CD8-positive, alpha-beta memory T cell (primary cell): ENCODE measurements at regions of chr10 and their contacts with region 1.

Region 1: GRCh38 chr10:27223964-27224363 is 16.6 kb downstream of the ACBD5 start:
- DNase-seq: peak; percentile 11 to 58 (median 35)
- H3K4me3 ChIP-seq: no peak overlapping the region
- H3K4me3 Mint-ChIP-seq: peak overlapping the region; percentile 18 to 84 (median 72)
- H3K27ac ChIP-seq: no peak overlapping the region
- H3K27ac Mint-ChIP-seq: peak overlapping the region in 7 of 8 donors; percentile 75 to 97 (median 91)
- H3K4me1 ChIP-seq: peaks cover 25% of the 10 kb centered on the region
- H3K4me1 Mint-ChIP-seq: peaks cover 32 to 40% (median 38%) of the 10 kb centered on the region in 3 donors
- H3K27me3 ChIP-seq: no peaks in the 10 kb centered on the region
- H3K27me3 Mint-ChIP-seq: no peaks in the 10 kb centered on the region

Region 2: GRCh38 chr10:26950934-26951333 is 273.0 kb before region 1 on chr10:
- CTCF ChIA-PET with region 1: no interaction called
- POLR2A ChIA-PET with region 1: no interaction called
- DNase-seq: no peak
- H3K4me3 ChIP-seq: no peak overlapping the region
- H3K4me3 Mint-ChIP-seq: no peak overlapping the region
- H3K27ac ChIP-seq: no peak overlapping the region
- H3K27ac Mint-ChIP-seq: peak overlapping the region in 1 of 8 donors; percentile 22
- H3K4me1 ChIP-seq: no peaks in the 10 kb centered on the region
- H3K4me1 Mint-ChIP-seq: no peaks in the 10 kb centered on the region
- H3K27me3 ChIP-seq: no peaks in the 10 kb centered on the region
- H3K27me3 Mint-ChIP-seq: peaks cover 2 to 5% of the 10 kb centered on the region in 2 donors

Region 3: GRCh38 chr10:27207350-27207749 is 16.6 kb before region 1 on chr10:
- CTCF ChIA-PET with region 1: interaction called, 10 read pairs
- POLR2A ChIA-PET with region 1: no interaction called
- DNase-seq: no peak
- H3K4me3 ChIP-seq: no peak overlapping the region
- H3K4me3 Mint-ChIP-seq: no peak overlapping the region
- H3K27ac ChIP-seq: no peak overlapping the region
- H3K27ac Mint-ChIP-seq: no peak overlapping the region
- H3K4me1 ChIP-seq: no peaks in the 10 kb centered on the region
- H3K4me1 Mint-ChIP-seq: peaks cover 0 to 2% (median 0%) of the 10 kb centered on the region in 3 donors
- H3K27me3 ChIP-seq: no peaks in the 10 kb centered on the region
- H3K27me3 Mint-ChIP-seq: no peaks in the 10 kb centered on the region

Region 4: GRCh38 chr10:27235706-27236105 is 11.7 kb after region 1 on chr10:
- CTCF ChIA-PET with region 1: interaction called, 20 read pairs
- POLR2A ChIA-PET with region 1: interaction called, 5 read pairs
- DNase-seq: no peak
- H3K4me3 ChIP-seq: no peak overlapping the region
- H3K4me3 Mint-ChIP-seq: peak overlapping the region in 1 of 7 donors; percentile 36
- H3K27ac ChIP-seq: no peak overlapping the region
- H3K27ac Mint-ChIP-seq: peak overlapping the region in 2 of 8 donors; percentile 23 to 29
- H3K4me1 ChIP-seq: peaks cover 7% of the 10 kb centered on the region
- H3K4me1 Mint-ChIP-seq: peaks cover 22 to 52% (median 37%) of the 10 kb centered on the region in 3 donors
- H3K27me3 ChIP-seq: no peaks in the 10 kb centered on the region
- H3K27me3 Mint-ChIP-seq: no peaks in the 10 kb centered on the region